Activated CD8-positive, alpha-beta T cell treated with anti-CD3 and anti-CD28 coated beads for 36 hours (primary cell): ENCODE measurements at regions of chr16 and their contacts with region 1.

Region 1: DNA sequence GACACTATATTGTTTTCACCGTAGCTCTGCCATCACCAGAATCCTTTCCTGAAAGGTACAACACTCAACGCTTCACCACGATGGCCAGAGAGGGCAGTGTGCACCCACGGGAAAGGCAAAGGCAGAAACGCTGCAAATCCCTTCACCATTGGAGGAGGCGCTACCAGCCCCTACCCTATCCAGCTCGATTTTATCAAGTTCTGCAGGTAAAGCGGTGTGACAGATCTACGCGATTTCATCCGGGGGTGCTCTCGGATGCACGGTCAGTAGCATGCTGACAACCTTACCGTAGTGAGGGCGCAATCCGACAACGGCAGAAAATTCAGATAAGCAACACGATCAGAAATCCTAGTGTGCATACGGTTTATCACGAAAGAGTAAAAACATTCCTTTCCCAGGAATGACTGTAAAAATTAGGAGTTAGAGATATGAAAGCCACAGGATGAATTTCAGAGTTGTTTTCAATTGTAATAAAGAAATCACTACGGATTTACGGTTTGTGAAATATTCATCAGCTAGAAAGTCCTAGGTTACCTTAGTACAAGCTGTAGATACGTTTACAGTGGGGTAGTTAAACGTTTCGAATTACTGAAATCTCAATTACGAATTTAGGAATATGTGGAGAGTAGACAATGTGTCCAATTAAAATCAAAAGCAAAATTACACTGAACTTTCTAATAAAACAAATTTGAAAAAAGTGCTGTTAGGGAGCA is 1.8 kb downstream of the NETO2 start:
- DNase-seq: peak; percentile 90
- ATAC-seq: peak; percentile 83
- H3K4me3 Mint-ChIP-seq: peak overlapping the region; percentile 70
- H3K27ac Mint-ChIP-seq: no peak overlapping the region
- H3K4me1 Mint-ChIP-seq: peaks cover 20% of the 10 kb centered on the region
- H3K27me3 Mint-ChIP-seq: peaks cover 26% of the 10 kb centered on the region
- CTCF ChIP-seq: peak; percentile 86

Region 2: DNA sequence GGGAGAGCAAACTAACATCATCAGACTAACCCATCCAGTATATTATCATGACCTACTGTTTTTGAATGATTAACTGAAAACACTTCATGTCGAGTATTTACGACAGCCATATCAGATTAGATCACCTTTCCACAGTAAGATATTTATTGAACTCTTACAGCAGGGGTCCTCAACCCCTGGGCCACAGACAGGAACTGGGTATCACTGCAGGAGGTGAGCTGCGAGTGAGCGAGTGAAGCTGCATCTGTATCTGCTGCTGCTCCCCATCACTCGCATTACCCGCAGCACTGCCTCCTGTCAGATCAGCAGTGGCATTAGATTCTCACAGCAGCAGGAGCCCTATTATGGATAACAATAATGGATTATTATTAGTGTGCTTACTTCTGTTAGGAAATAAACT is 57.7 kb before region 1 on chr16:
- CTCF ChIA-PET with region 1: no interaction called
- POLR2A ChIA-PET with region 1: no interaction called
- intact Hi-C with region 1: no loop called
- DNase-seq: no peak
- ATAC-seq: no peak
- H3K4me3 Mint-ChIP-seq: no peak overlapping the region
- H3K27ac Mint-ChIP-seq: no peak overlapping the region
- H3K4me1 Mint-ChIP-seq: no peaks in the 10 kb centered on the region
- H3K27me3 Mint-ChIP-seq: no peaks in the 10 kb centered on the region
- CTCF ChIP-seq: no peak

Region 3: DNA sequence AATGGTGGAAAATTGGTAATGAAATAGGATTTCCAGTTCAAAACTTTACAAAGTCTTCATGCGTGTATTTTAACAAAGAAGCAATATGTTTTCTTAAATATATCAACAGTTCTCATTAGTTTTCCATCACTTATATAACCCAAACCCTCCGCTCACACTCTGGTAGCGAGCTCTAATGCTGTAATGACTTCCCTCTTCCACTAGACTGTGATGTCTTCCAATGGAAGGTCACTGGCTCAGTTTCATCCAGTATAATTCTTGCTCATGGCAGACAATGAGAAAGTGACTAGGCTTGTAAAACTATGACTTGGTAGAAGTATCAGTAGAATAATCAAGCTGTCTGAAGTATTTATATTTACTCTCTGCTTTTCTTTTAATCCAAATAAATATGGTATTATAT is 31.0 kb before region 1 on chr16:
- CTCF ChIA-PET with region 1: interaction called, 13 read pairs
- POLR2A ChIA-PET with region 1: interaction called, 3 read pairs
- intact Hi-C with region 1: no loop called
- DNase-seq: no peak
- ATAC-seq: no peak
- H3K4me3 Mint-ChIP-seq: no peak overlapping the region
- H3K27ac Mint-ChIP-seq: no peak overlapping the region
- H3K4me1 Mint-ChIP-seq: peaks cover 13% of the 10 kb centered on the region
- H3K27me3 Mint-ChIP-seq: no peaks in the 10 kb centered on the region
- CTCF ChIP-seq: no peak

Region 4: DNA sequence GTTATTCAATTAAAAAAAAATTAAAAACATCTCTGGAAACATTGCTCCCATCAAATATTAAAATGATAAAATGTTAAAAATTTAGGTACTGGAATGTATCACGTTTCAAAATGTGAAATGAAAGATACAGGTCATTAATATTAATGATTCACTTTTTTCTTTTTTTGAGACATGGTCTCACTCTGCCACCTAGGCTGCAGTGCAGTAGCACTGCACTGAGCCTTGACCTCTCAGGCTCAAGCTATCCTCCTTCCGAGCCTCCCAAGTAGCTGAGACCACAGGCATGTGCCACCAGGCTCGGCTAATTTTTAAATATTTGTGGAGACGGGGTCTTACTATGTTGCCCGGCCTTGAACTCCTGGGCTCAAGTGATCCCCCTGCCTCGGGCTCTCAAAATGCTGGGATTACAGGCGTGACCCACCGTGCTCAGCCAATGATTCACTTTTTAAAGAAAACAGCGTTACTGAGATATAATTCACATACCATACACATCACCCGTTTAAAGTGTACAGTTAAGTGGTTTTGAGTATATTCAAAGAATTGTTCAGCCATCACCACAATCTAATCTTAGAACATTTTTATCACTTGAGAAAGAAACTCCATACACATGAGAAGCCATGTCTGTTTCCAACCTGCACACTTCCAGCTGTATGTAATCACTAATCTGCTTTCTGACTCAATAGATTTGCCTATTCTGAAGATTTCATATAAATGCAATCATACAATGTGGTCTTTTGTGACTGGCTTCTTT is 20.9 kb after region 1 on chr16:
- CTCF ChIA-PET with region 1: interaction called, 15 read pairs
- POLR2A ChIA-PET with region 1: no interaction called
- intact Hi-C with region 1: no loop called
- DNase-seq: no peak
- ATAC-seq: no peak
- H3K4me3 Mint-ChIP-seq: no peak overlapping the region
- H3K27ac Mint-ChIP-seq: no peak overlapping the region
- H3K4me1 Mint-ChIP-seq: no peaks in the 10 kb centered on the region
- H3K27me3 Mint-ChIP-seq: no peaks in the 10 kb centered on the region
- CTCF ChIP-seq: no peak

Region 5: GRCh38 chr16:47213761-47214440 is 72.0 kb after region 1 on chr16:
- CTCF ChIA-PET with region 1: no interaction called
- POLR2A ChIA-PET with region 1: no interaction called
- intact Hi-C with region 1: no loop called
- DNase-seq: no peak
- ATAC-seq: no peak
- H3K4me3 Mint-ChIP-seq: no peak overlapping the region
- H3K27ac Mint-ChIP-seq: no peak overlapping the region
- H3K4me1 Mint-ChIP-seq: no peaks in the 10 kb centered on the region
- H3K27me3 Mint-ChIP-seq: no peaks in the 10 kb centered on the region
- CTCF ChIP-seq: no peak

Region 6: GRCh38 chr16:48156790-48157209 is 1014.9 kb after region 1 on chr16:
- CTCF ChIA-PET with region 1: interaction called, 47 read pairs
- POLR2A ChIA-PET with region 1: no interaction called
- intact Hi-C with region 1: loop called (anchors 10 kb)
- DNase-seq: peak; percentile 89
- ATAC-seq: no peak
- H3K4me3 Mint-ChIP-seq: no peak overlapping the region
- H3K27ac Mint-ChIP-seq: no peak overlapping the region
- H3K4me1 Mint-ChIP-seq: peaks cover 28% of the 10 kb centered on the region
- H3K27me3 Mint-ChIP-seq: peaks cover 22% of the 10 kb centered on the region
- CTCF ChIP-seq: peak; percentile 98